Heart left ventricle (tissue), 16 donors: ENCODE measurements at regions of chr4 and their contacts with region 1.

Region 1: DNA sequence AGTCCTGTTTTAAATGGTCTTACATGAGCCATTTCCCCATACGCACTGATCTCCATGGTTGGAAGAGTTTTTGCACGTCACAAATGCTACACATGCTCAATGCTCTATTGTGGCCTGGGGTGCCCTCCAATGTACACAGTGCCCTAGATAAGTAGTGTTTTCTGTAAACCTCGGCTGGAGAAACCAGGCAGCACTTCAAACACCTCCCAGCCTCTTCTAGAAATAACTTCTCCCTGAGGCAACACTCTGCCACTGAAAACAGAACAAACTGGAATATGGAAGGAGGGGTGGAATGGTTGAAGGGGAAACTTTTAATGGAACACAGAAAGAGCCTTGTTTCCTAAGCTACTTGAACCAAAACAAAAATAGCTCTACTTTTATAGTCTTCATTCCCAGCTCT is 123.9 kb upstream of the CBR4 start:
- DNase-seq: peak in 1 of 5 donors; percentile 10
- ATAC-seq: peak; percentile 63 to 89 (median 76)
- H3K4me3 ChIP-seq: no peak overlapping the region
- H3K27ac ChIP-seq: peak overlapping the region in 10 of 12 donors; percentile 24 to 70 (median 50)
- H3K4me1 ChIP-seq: peaks cover 0 to 66% (median 19%) of the 10 kb centered on the region in 12 donors
- H3K27me3 ChIP-seq: no peaks in the 10 kb centered on the region
- CTCF ChIP-seq: no peak
- POLR2A ChIP-seq: no peak

Region 2: GRCh38 chr4:169059306-169060211 is 74.4 kb before region 1 on chr4:
- intact Hi-C with region 1: loop called in 1 of 10 experiments (anchors 10 kb)
- DNase-seq: peak in 4 of 5 donors; percentile 57 to 74 (median 69)
- ATAC-seq: peak; percentile 64 to 90 (median 74)
- H3K4me3 ChIP-seq: peak overlapping the region in 6 of 12 donors; percentile 7 to 30 (median 17)
- H3K27ac ChIP-seq: peak overlapping the region; percentile 56 to 93 (median 86)
- H3K4me1 ChIP-seq: peaks cover 0 to 60% (median 36%) of the 10 kb centered on the region in 12 donors
- H3K27me3 ChIP-seq: no peaks in the 10 kb centered on the region
- CTCF ChIP-seq: no peak
- POLR2A ChIP-seq: no peak

Region 3: DNA sequence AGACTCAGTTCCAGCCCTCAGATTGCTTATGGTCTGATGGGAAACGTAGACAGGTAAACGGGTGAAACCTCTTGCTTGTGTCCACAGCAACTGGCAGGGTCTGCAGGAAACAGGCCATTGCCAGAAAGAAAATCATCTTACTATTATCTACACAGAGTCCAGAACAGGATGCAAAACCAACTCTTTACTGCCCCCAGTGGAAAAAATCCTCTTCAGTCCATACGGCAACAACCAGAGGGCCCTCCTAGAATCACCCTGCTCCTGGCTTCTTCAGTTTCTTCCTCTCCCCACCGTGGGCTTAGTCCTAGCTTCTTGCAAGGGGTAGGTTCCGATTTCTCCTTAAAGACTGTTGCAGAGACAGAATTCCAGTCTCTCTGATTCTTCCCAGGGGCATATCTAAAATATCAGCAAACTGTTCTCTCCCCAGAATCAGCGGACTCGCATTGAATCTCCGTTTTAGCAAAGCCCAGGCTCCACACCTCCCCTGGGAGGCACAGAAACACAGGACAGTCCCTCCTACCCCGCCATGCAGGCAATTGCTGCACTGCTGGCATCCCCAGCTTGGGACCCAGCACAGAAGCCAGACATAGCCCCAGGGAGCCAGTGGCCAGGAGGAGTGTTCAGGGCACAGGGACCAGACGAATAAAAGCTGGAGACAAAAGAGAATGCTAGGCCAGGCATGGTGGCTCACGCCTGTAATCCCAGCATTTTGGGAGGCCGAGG is 177.9 kb after region 1 on chr4:
- intact Hi-C with region 1: loop called in 1 of 10 experiments (anchors 10 kb)
- DNase-seq: peak in 2 of 5 donors; percentile 32 to 40
- ATAC-seq: peak; percentile 39 to 87 (median 84)
- H3K4me3 ChIP-seq: no peak overlapping the region
- H3K27ac ChIP-seq: no peak overlapping the region
- H3K4me1 ChIP-seq: peaks cover 6 to 25% (median 19%) of the 10 kb centered on the region in 12 donors
- H3K27me3 ChIP-seq: no peaks in the 10 kb centered on the region
- CTCF ChIP-seq: peak; percentile 47 to 76 (median 58)
- POLR2A ChIP-seq: no peak

Region 4: GRCh38 chr4:169404960-169405359 is 271.0 kb after region 1 on chr4:
- intact Hi-C with region 1: loop called in 1 of 10 experiments (anchors 10 kb)
- DNase-seq: no peak
- ATAC-seq: no peak
- H3K4me3 ChIP-seq: no peak overlapping the region
- H3K27ac ChIP-seq: no peak overlapping the region
- H3K4me1 ChIP-seq: peaks cover 0 to 6% (median 0%) of the 10 kb centered on the region in 12 donors
- H3K27me3 ChIP-seq: no peaks in the 10 kb centered on the region
- CTCF ChIP-seq: no peak
- POLR2A ChIP-seq: no peak